Mammary epithelial cell (primary cell): ENCODE measurements at regions of chr2 and their contacts with region 1.

Region 1: DNA sequence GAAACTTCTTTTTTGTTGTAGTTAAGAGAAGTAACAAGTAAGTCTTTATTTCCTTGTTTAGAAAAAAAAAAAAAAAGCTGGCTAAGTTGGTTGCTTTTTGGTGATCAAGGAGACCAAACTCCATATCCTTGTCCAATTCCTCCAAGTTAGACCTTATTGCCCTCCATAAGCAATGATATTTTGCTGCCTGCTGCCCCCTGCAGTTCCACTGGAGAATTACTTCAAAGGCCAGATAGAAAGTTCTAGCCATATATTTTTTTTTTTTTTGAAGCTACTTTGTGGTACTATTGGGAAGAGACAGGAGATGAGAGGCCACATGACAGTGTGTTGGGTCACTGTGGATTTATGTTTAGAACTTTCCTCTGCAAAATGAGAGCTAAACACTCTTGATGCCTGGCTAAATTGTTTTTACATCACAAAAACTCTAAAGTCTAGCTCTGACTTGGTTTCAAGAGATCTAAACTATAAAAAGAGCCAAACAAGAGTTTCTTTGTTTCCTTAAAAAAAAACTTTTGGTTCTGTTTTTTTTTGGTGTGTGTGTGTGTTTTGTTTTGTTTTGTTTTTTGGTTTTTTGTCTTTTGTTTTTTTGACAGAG is 80.7 kb upstream of the RASGRP3 start:
- DNase-seq: peak; percentile 40
- H3K4me3 ChIP-seq: no peak overlapping the region
- H3K27ac ChIP-seq: no peak overlapping the region
- H3K4me1 ChIP-seq: no peaks in the 10 kb centered on the region
- H3K27me3 ChIP-seq: no peaks in the 10 kb centered on the region
- CTCF ChIP-seq: peak; percentile 68 to 75

Region 2: DNA sequence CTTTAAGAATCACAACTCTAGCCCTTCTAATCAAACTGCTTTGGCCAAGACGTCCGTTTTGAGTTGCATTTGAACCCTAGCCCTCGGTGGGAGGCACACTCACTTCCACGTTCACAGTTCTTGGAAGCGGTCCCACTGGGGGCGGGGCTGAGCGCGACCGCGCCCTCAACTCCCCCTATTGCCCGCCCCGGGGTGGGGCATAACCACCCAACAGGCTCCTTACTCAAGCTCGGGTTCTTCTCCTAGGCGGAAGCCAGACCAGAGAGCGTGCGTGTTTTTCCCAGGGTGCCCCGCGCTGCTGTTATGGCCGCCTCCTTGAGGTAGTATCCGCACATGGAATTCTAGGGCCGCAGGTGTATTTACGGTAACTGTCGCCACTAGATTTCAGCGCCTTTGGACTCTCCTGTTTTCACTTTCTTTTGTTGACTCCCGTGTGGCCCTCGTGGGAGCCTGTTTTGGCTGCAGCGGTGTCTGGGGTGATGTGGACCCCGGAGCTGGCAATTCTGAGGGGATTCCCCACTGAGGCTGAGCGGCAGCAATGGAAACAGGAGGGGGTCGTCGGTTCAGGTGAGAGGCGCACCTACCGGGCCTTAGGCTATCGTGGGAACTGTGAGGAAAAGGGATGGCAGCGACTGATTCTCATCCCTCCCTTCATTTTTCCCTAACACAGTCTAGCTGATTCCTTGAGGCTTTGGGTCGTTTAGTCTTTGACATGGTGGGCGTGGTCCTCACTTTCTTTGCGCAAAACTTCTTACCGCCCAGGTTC is 767.8 kb before region 1 on chr2 and contains the start of gene TTC27:
- CTCF ChIA-PET with region 1: no interaction called
- dilution Hi-C with region 1: loop called (anchors 10 kb)
- in situ Hi-C with region 1: no loop called
- intact Hi-C with region 1: no loop called
- DNase-seq: peak; percentile 93
- H3K4me3 ChIP-seq: peak within 1 kb of the TSS; percentile 78 to 96 (median 90)
- H3K27ac ChIP-seq: peak within 1 kb of the TSS; percentile 79
- H3K4me1 ChIP-seq: peaks cover 5% of the 10 kb centered on the region
- H3K27me3 ChIP-seq: no peaks in the 10 kb centered on the region
- CTCF ChIP-seq: no peak
- total RNA-seq, gene TTC27: 18.5 to 26.5 TPM

Region 3: DNA sequence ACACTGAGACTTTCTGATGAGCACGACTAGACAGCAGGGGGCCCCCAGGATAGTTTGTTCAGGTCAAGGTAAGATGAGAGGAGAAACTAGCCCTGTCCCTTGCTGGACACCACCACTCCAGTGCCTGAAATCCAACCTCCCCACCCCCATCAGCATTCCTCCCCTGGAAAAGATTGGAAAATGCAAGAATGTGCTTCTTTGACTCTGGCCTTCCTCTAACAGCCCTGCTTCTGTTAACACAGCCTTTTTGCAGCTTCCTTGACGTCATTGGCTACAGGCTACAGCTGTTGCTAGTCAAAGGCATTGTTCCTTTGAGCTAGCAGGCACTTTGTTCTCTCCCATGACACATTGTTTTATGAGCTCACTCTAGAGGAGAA is 469.1 kb before region 1 on chr2:
- CTCF ChIA-PET with region 1: no interaction called
- dilution Hi-C with region 1: no loop called
- in situ Hi-C with region 1: no loop called
- intact Hi-C with region 1: no loop called
- DNase-seq: no peak
- H3K4me3 ChIP-seq: no peak overlapping the region
- H3K27ac ChIP-seq: no peak overlapping the region
- H3K4me1 ChIP-seq: no peaks in the 10 kb centered on the region
- H3K27me3 ChIP-seq: peaks cover 2% of the 10 kb centered on the region
- CTCF ChIP-seq: no peak

Region 4: DNA sequence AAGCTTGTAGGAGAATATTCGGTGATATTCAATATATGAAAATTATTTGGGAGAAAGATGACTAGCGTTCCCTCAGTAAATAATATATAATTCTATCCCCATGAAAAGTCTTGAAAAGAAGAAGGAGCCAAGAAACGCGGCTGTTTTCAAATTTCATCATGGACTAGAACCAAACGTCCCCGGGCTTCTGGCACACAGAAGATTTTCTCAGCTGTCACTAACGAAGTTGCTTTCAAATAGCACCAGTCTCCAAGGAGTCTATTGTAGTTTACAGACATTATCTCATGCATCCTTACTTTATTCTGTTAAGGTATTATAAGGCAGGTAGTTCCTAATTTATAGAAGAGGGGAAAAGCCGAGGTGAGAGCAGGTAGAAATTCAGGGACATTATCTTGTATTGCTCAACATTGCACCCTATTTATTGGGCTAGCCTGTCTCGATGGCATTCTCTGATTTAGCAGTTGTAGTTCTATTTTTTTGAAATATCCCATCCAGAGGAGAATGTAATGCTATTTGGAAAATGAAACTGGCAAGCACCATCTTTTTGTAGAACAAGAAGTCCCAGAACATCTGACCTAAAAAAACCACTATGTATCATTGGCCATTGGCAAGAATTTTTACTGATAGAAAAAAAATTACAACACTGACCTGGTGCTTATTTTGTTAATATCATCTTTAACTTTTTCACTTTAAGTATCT is 117.4 kb before region 1 on chr2:
- CTCF ChIA-PET with region 1: no interaction called
- dilution Hi-C with region 1: no loop called
- in situ Hi-C with region 1: no loop called
- intact Hi-C with region 1: no loop called
- DNase-seq: no peak
- H3K4me3 ChIP-seq: no peak overlapping the region
- H3K27ac ChIP-seq: no peak overlapping the region
- H3K4me1 ChIP-seq: no peaks in the 10 kb centered on the region
- H3K27me3 ChIP-seq: no peaks in the 10 kb centered on the region
- CTCF ChIP-seq: no peak

Region 5: DNA sequence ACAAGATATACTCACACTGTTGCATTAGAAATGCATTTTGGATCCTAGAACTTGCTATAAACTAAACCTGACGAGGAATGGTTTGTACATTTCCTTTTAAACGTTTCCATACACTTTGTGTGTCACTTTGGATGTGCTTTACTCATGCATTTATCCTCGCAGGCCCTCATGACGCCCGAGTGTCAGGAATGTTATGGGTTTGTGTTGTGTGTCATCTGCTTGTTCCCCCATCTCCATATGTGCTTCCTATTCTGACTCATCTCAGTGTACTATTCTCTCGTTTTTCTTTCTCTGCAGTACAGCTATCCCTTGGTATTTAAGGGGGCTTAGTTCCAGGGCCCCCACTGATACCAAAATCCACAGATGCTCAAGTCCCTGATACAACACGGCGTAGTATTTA is 40.8 kb before region 1 on chr2:
- CTCF ChIA-PET with region 1: no interaction called
- dilution Hi-C with region 1: no loop called
- in situ Hi-C with region 1: no loop called
- intact Hi-C with region 1: no loop called
- DNase-seq: no peak
- H3K4me3 ChIP-seq: no peak overlapping the region
- H3K27ac ChIP-seq: no peak overlapping the region
- H3K4me1 ChIP-seq: no peaks in the 10 kb centered on the region
- H3K27me3 ChIP-seq: no peaks in the 10 kb centered on the region
- CTCF ChIP-seq: no peak

Region 6: GRCh38 chr2:33406622-33407021 is 10.9 kb after region 1 on chr2:
- CTCF ChIA-PET with region 1: interaction called, 14 read pairs
- dilution Hi-C with region 1: no loop called
- in situ Hi-C with region 1: no loop called
- intact Hi-C with region 1: no loop called
- DNase-seq: peak; percentile 19
- H3K4me3 ChIP-seq: no peak overlapping the region
- H3K27ac ChIP-seq: no peak overlapping the region
- H3K4me1 ChIP-seq: peaks cover 10% of the 10 kb centered on the region
- H3K27me3 ChIP-seq: no peaks in the 10 kb centered on the region
- CTCF ChIP-seq: no peak